PC-9 (cell line): ENCODE measurements at regions of chr10 and their contacts with region 1.

Region 1: DNA sequence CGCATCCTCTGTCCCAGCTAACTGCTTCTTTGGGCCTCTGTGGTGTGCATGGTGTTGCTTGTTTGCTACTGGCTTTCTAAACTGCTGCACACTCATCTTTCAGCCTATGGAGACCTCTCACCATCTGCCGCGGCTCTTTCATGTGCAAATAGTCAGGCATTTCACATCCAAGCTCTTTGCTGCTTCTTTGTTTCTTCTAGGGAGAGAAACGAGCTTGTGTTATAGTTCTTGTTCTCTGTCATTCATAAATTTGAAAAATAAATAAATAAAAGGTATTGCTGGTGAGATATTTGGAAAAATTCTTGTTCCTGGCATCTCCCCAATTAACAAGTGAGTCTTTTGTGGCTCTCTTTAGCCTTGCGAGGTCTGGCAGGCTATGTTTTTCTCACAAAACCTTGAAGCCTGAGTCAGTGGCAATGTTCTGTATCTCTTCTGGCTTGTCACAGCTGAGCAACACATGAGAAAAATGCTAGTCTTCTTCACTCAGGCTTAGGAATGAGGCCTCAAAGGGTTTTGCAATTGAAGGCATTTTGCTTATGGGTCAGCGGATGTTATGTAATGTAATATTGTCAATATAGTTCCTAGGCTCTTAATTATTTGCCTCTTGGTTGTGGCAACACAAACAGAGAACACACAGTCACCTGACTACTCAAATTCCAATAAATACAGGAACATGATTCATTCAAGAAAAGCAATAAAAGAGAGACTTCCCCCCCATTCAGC is 274.0 kb downstream of the FRMD4A start:
- DNase-seq: peak in 1 of 2 experiments; percentile 93
- H3K4me3 ChIP-seq: no peak overlapping the region
- H3K27ac ChIP-seq: peak overlapping the region; percentile 72
- H3K4me1 ChIP-seq: peaks cover 21% of the 10 kb centered on the region
- H3K27me3 ChIP-seq: no peaks in the 10 kb centered on the region
- CTCF ChIP-seq: no peak

Region 2: GRCh38 chr10:14200698-14201544 is 144.2 kb after region 1 on chr10:
- CTCF ChIA-PET with region 1: no interaction called
- POLR2A ChIA-PET with region 1: interaction called, 10 read pairs
- intact Hi-C with region 1: no loop called
- DNase-seq: peak in 1 of 2 experiments; percentile 8
- H3K4me3 ChIP-seq: no peak overlapping the region
- H3K27ac ChIP-seq: no peak overlapping the region
- H3K4me1 ChIP-seq: no peaks in the 10 kb centered on the region
- H3K27me3 ChIP-seq: no peaks in the 10 kb centered on the region
- CTCF ChIP-seq: peak; percentile 47; the same call in 1 of the 2 replicates